ENCODE measurements at regions of chr3 and their contacts with region 1.

Region 1: DNA sequence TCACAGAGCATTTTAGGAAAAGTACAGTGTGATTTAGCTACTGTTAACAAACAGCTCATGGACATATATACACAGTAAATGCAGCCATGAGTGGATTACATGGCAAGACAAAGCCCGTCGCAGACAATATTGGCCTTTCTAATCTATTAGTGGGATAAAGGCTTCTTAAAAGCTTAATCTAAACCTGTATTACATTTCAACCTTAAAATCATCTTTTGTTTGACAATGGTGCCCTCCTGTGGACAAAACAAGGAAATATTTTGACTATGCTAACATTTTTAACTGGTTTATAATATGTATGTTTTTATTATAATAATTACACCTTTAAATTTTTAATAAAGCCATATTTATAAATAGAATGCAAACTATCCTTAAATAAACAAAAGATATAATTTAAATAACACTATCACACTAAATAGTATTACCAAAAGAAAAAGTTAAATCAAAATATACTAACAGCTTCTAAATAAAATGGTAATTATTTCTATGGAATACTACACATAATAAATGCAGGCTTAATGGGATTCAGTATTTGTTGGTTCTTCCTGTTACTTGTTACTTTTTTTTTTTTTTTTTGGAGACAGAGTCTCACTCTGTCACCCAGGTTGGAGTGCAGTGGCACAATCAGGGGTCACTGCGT is 38.6 kb downstream of the TAFA4 start:
- DNase-seq: peak; percentile 49
- ATAC-seq: no peak
- H3K4me3 ChIP-seq: no peak overlapping the region
- H3K27ac ChIP-seq: no peak overlapping the region
- H3K4me1 ChIP-seq: no peaks in the 10 kb centered on the region
- H3K27me3 ChIP-seq: peaks cover 8% of the 10 kb centered on the region; the same call in 1 of the 2 replicates
- CTCF ChIP-seq: 0 out of 2 replicates have a peak, but pooled peaks have one; percentile 19

Region 2: DNA sequence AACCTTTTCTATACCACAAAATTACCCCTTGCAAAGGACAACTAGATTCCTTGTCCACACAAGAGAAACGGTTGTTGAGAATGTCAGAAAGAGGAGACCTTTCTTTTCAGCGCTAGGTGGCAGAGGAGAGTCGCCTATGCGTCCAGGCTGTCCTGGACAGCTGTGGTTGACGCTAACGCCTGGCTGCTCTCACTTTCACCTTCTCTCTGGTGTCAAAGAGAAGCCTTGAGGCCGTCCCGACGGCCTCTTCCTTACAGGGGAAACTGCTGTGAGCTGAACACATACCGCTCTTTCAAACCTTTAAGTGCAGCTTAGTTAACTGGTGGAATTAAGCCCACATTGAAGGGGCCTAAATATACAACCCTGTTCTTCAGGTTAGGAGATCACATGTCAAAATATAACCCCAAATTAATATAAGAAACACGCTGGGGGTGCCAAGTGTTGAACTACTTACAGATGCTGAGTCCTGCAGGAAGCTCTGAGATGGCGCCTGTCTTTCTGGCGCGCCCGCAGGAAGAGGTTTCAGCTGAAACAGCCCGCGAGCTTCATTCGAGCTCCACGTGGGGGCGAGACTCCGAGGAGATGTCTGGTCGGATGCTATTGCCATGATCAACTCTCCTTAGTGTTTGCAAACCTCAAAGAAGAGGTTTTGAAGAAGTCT is 1921.7 kb before region 1 on chr3:
- CTCF ChIA-PET with region 1: no interaction called
- POLR2A ChIA-PET with region 1: no interaction called
- intact Hi-C with region 1: loop called (anchors 5 kb)
- DNase-seq: peak; percentile 52
- ATAC-seq: peak; percentile 93
- H3K4me3 ChIP-seq: no peak overlapping the region
- H3K27ac ChIP-seq: no peak overlapping the region
- H3K4me1 ChIP-seq: no peaks in the 10 kb centered on the region
- H3K27me3 ChIP-seq: peaks cover 18% of the 10 kb centered on the region; the same call in 1 of the 2 replicates
- CTCF ChIP-seq: peak; percentile 62

Region 3: GRCh38 chr3:68904578-68904977 is 10.9 kb after region 1 on chr3:
- CTCF ChIA-PET with region 1: interaction called, 18 read pairs
- POLR2A ChIA-PET with region 1: no interaction called
- intact Hi-C with region 1: no loop called
- DNase-seq: no peak
- ATAC-seq: no peak
- H3K4me3 ChIP-seq: no peak overlapping the region
- H3K27ac ChIP-seq: no peak overlapping the region
- H3K4me1 ChIP-seq: no peaks in the 10 kb centered on the region
- H3K27me3 ChIP-seq: peaks cover 49% of the 10 kb centered on the region
- CTCF ChIP-seq: no peak

Region 4: GRCh38 chr3:69020424-69020823 is 126.7 kb after region 1 on chr3:
- CTCF ChIA-PET with region 1: interaction called, 14 read pairs
- POLR2A ChIA-PET with region 1: no interaction called
- intact Hi-C with region 1: no loop called
- DNase-seq: peak; percentile 6
- ATAC-seq: no peak
- H3K4me3 ChIP-seq: no peak overlapping the region
- H3K27ac ChIP-seq: no peak overlapping the region
- H3K4me1 ChIP-seq: no peaks in the 10 kb centered on the region
- H3K27me3 ChIP-seq: no peaks in the 10 kb centered on the region
- CTCF ChIP-seq: peak; percentile 54

Measured in PC-3 (cell line).